Activated naive CD4-positive, alpha-beta T cell treated with anti-CD3 and anti-CD28 coated beads for 36 hours (primary cell): ENCODE measurements at regions of chr6 and their contacts with region 1.

Region 1: DNA sequence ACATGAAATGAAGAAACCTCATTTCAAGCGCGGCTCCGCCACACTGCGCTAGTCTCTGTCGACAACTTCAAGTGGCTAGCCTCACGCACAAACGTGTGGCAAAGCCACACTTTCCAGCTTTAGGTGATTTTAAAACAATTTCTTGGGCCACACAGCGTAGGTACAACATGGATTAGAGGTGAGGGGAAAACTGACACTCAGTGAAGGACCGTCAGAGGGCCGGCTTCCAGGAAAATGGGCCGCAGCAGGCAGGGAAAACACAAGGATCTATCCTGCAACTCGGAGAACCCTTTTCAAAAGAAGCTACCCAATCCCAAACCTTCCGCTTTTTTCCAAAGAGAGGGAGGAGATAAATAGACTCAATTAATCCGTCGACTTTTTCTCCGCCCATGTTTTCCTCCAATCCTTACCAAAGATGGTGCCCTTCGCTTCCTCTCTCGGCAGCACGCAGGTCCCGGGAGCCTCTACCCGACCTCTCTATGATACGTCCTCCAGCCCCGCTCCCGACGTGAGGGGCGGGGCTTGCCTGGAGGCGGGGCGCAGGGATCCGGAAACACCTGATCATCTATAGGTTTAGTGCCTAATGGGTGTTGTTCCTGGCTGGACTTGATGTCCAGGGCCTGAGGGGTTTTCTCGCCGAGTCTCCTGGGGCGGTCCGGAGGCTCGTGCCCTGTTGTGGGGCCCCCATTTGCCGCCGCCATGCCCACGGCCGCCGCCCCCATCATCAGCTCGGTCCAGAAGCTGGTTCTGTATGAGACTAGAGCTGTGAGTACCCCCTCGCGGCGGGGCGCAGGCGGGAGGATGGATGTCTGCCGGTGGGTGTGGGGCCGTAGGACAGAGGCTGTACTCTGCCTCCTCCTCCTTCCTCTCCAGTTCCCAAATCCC is at the starts of genes AK9 and FIG4:
- DNase-seq: peak; percentile 94
- H3K4me3 Mint-ChIP-seq: peak within 1 kb of the TSS; percentile 83
- H3K27ac Mint-ChIP-seq: peak within 1 kb of the TSS; percentile 81
- H3K4me1 Mint-ChIP-seq: peaks cover 26% of the 10 kb centered on the region
- H3K27me3 Mint-ChIP-seq: no peaks in the 10 kb centered on the region
- total RNA-seq, gene AK9: 1.7 TPM
- total RNA-seq, gene FIG4: 14.0 to 16.4 TPM

Region 2: GRCh38 chr6:109187399-109188114 is 503.4 kb before region 1 on chr6:
- CTCF ChIA-PET with region 1: no interaction called
- intact Hi-C with region 1: loop called (anchors 2 kb)
- DNase-seq: peak; percentile 70
- H3K4me3 Mint-ChIP-seq: no peak overlapping the region
- H3K27ac Mint-ChIP-seq: no peak overlapping the region
- H3K4me1 Mint-ChIP-seq: no peaks in the 10 kb centered on the region
- H3K27me3 Mint-ChIP-seq: peaks cover 11% of the 10 kb centered on the region

Region 3: GRCh38 chr6:109304284-109305015 is 386.5 kb before region 1 on chr6:
- CTCF ChIA-PET with region 1: no interaction called
- intact Hi-C with region 1: no loop called
- DNase-seq: peak; percentile 27
- H3K4me3 Mint-ChIP-seq: no peak overlapping the region
- H3K27ac Mint-ChIP-seq: no peak overlapping the region
- H3K4me1 Mint-ChIP-seq: peaks cover 13% of the 10 kb centered on the region
- H3K27me3 Mint-ChIP-seq: no peaks in the 10 kb centered on the region

Region 4: DNA sequence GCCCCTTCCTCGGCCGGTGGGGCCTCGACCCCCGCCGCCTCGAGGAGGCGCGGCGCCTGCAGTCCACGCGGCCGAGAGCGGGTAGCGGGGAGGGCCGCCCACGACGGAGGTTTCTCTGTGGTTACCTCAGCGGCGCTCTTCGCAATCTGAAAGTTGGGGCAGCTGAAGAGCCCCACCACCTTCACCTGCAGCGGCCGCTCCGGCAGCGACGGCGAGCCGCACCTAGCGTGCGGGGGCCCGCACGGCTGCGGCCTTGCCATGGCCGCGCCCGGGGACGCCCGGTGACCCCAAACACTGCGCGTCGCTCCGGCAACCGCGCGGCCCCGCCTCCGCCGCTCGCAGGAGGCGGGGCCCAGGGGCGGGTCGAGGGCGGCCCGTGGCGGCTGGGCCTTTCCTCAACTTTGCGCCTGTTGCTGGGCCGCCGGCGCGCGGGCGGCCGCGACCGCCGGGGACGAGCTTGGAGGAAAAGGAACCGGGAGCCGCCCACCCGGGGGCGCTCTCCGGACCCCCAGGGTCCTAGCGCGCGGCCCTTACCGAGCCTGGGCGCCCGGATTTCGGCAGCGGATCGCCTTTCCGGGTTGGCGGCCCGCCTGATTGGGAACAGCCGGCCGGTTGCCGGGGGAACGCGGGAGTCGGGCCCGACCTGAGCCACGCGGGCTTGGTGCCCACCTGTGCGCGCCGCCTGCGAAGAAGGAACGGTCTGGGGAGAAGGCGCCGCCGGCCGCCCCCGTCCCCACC is 250.5 kb before region 1 on chr6 and contains the starts of genes PPIL6 and SMPD2:
- CTCF ChIA-PET with region 1: no interaction called
- intact Hi-C with region 1: loop called (anchors 5 kb)
- DNase-seq: peak; percentile 76
- H3K4me3 Mint-ChIP-seq: peak within 1 kb of the TSS; percentile 94
- H3K27ac Mint-ChIP-seq: peak within 1 kb of the TSS; percentile 87
- H3K4me1 Mint-ChIP-seq: peaks cover 27% of the 10 kb centered on the region
- H3K27me3 Mint-ChIP-seq: no peaks in the 10 kb centered on the region
- total RNA-seq, gene PPIL6: 0.19 TPM in 1 of 2 experiments, not detected in the other
- total RNA-seq, gene SMPD2: 9.4 to 9.7 TPM

Region 5: DNA sequence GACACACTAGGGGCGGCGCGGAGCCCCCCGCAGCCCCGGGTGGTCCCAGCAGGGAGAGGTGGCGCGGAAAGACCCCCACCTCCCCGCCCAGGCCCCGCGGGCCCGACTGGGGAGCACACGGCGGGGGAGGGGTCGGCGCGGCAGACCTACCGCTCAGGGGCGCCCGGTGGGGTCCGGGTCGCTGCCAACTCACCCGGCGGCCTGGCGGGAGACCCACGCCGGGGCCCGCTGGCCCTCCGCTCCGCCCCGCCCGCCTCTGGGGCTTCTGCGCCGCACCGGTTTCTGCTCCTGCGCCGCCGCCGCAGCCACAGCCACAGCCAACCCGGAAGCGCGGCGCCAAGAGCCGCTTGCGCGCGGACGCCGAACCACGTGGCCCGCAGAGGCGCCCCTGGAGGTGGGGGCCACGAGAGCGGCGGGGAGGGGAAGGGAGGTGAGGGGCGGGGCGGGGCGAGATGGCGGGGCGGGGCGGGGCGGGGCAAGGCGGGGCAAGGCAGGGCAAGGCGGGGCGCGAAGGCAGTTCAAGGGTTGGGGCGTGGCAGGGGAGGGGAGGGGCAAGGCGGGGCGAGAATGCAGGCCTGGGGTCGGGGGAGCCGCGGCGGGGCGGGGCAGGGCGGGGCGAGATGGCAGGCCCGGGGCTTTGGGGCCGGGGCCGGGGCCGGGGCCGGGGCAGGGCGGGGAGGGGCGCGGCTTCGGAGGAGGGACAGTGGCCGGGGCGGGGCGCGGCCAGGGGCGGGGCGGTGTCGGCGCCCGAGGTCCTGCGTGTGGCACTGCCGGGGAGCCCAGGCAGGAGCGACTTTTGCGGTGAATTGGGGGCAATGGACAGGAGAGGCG is 207.9 kb before region 1 on chr6 and contains the start of gene ZBTB24:
- CTCF ChIA-PET with region 1: no interaction called
- intact Hi-C with region 1: loop called (anchors 1 kb)
- DNase-seq: peak; percentile 88
- H3K4me3 Mint-ChIP-seq: peak within 1 kb of the TSS; percentile 85
- H3K27ac Mint-ChIP-seq: peak within 1 kb of the TSS; percentile 80
- H3K4me1 Mint-ChIP-seq: peaks cover 37% of the 10 kb centered on the region
- H3K27me3 Mint-ChIP-seq: no peaks in the 10 kb centered on the region
- total RNA-seq, gene ZBTB24: 6.9 to 7.4 TPM

Region 6: DNA sequence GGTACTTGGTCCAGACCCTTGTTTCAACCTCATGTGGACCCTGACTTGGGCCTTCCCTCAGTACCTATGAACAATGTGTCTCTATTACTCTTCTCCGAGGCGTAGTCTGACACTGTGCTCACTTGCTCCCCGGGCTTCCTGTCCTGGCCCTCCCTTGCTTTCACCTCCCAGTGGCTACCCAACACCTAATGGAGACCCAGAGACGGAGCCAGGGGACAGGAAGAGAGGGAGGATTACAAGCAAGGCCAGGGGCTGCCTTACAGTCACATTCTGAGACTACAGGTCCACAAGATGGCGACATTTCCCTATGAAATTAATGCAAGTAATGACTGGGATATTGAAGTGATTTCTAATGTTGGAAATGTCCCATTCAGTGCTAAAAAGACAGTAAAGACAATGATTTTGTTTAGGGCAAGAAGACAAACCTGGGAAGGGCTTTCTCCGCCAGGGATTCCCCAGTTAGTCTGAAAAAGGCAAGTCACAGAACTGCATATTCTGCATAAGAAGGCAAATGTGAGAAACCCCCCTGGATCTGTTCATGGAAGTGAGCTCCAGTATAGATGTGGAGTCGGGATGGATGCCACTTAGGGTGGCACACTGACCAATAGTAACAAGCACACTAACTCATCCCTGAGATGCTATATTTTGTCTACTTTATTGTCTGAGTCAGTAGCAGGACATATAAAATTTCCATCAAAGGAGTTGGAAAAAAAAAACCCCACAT is 163.9 kb before region 1 on chr6:
- CTCF ChIA-PET with region 1: interaction called, 5 read pairs
- intact Hi-C with region 1: loop called (anchors 1 kb)
- DNase-seq: peak; percentile 70
- H3K4me3 Mint-ChIP-seq: no peak overlapping the region
- H3K27ac Mint-ChIP-seq: no peak overlapping the region
- H3K4me1 Mint-ChIP-seq: peaks cover 2% of the 10 kb centered on the region
- H3K27me3 Mint-ChIP-seq: no peaks in the 10 kb centered on the region

Region 7: GRCh38 chr6:109628158-109629000 is 62.6 kb before region 1 on chr6:
- CTCF ChIA-PET with region 1: no interaction called
- intact Hi-C with region 1: loop called (anchors 2 kb)
- DNase-seq: no peak
- H3K4me3 Mint-ChIP-seq: no peak overlapping the region
- H3K27ac Mint-ChIP-seq: peak overlapping the region; percentile 66
- H3K4me1 Mint-ChIP-seq: peaks cover 18% of the 10 kb centered on the region
- H3K27me3 Mint-ChIP-seq: no peaks in the 10 kb centered on the region

Region 8: GRCh38 chr6:110944681-110945151 is 1253.7 kb after region 1 on chr6:
- CTCF ChIA-PET with region 1: no interaction called
- intact Hi-C with region 1: loop called (anchors 10 kb)
- DNase-seq: peak; percentile 67
- H3K4me3 Mint-ChIP-seq: no peak overlapping the region
- H3K27ac Mint-ChIP-seq: peak overlapping the region; percentile 51
- H3K4me1 Mint-ChIP-seq: peaks cover 8% of the 10 kb centered on the region
- H3K27me3 Mint-ChIP-seq: no peaks in the 10 kb centered on the region